PC-3 (cell line): ENCODE measurements at regions of chr11 and their contacts with region 1.

Region 1: GRCh38 chr11:130002846-130003716 is 446 bp upstream of the PRDM10 start:
- DNase-seq: peak; percentile 99
- ATAC-seq: peak; percentile 68
- H3K4me3 ChIP-seq: peak overlapping the region; percentile 86
- H3K27ac ChIP-seq: peak overlapping the region; percentile 98
- H3K4me1 ChIP-seq: peaks cover 26% of the 10 kb centered on the region
- H3K27me3 ChIP-seq: no peaks in the 10 kb centered on the region
- CTCF ChIP-seq: 0 out of 2 replicates have a peak, but pooled peaks have one; percentile 7

Region 2: DNA sequence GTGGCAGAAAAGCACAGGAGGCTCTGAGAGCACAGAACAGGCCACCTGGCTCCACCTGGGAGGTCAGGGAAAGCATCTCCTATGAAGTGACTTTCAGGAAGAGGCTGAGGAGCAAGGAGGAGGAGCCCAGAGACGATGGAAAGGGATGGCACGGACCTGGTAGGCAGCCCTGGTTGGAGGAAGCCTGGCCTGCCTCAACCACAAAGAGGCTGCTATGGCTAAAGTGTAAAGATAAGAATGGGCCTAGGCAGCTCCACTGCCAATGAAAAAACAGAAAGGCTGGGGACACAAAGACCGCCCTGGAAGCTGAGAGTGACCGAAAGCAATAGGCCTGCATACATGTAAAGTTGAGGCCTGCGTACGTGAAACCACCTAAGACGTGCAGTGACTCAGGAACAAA is 1384.5 kb before region 1 on chr11:
- CTCF ChIA-PET with region 1: no interaction called
- POLR2A ChIA-PET with region 1: interaction called, 15 read pairs
- intact Hi-C with region 1: no loop called
- DNase-seq: no peak
- ATAC-seq: no peak
- H3K4me3 ChIP-seq: no peak overlapping the region
- H3K27ac ChIP-seq: no peak overlapping the region
- H3K4me1 ChIP-seq: peaks cover 4% of the 10 kb centered on the region; the same call in 1 of the 2 replicates
- H3K27me3 ChIP-seq: no peaks in the 10 kb centered on the region
- CTCF ChIP-seq: no peak

Region 3: GRCh38 chr11:129960216-129961214 is 42.6 kb before region 1 on chr11:
- CTCF ChIA-PET with region 1: no interaction called
- POLR2A ChIA-PET with region 1: interaction called, 25 read pairs
- intact Hi-C with region 1: loop called (anchors 2 kb)
- DNase-seq: peak; percentile 98
- ATAC-seq: peak; percentile 99
- H3K4me3 ChIP-seq: peak overlapping the region; percentile 8; the same call in 1 of the 2 replicates
- H3K27ac ChIP-seq: peak overlapping the region; percentile 55
- H3K4me1 ChIP-seq: peaks cover 19% of the 10 kb centered on the region
- H3K27me3 ChIP-seq: no peaks in the 10 kb centered on the region
- CTCF ChIP-seq: no peak

Region 4: GRCh38 chr11:130042093-130042591 is 39.1 kb after region 1 on chr11:
- CTCF ChIA-PET with region 1: no interaction called
- POLR2A ChIA-PET with region 1: no interaction called
- intact Hi-C with region 1: loop called (anchors 2 kb)
- DNase-seq: peak; percentile 97
- ATAC-seq: peak; percentile 100
- H3K4me3 ChIP-seq: no peak overlapping the region
- H3K27ac ChIP-seq: peak overlapping the region; percentile 81
- H3K4me1 ChIP-seq: peaks cover 19% of the 10 kb centered on the region
- H3K27me3 ChIP-seq: no peaks in the 10 kb centered on the region
- CTCF ChIP-seq: no peak

Region 5: DNA sequence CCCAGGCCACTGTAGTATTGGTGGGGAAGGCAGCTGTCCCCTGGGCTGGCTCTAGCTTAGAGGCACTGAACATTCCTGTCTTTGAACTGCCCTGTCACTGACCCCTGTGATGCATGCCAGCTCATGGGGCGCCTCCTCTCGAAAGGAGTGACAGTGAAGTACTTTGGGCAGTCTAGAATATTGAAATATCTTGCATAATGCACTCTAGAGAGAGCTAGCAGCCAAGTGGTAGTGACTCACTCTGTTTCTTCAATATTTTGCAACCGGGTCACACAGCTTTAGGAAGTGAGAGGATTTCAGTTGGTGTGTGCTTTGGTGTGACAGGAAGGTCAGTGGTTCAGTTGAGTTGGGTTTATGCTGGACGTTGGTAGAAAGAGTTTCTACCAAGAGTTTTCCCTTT is 121.0 kb after region 1 on chr11:
- CTCF ChIA-PET with region 1: interaction called, 3 read pairs
- POLR2A ChIA-PET with region 1: interaction called, 5 read pairs
- intact Hi-C with region 1: loop called (anchors 2 kb)
- DNase-seq: peak; percentile 96
- ATAC-seq: peak; percentile 94
- H3K4me3 ChIP-seq: peak overlapping the region; percentile 11; the same call in 1 of the 2 replicates
- H3K27ac ChIP-seq: peak overlapping the region; percentile 62
- H3K4me1 ChIP-seq: peaks cover 16% of the 10 kb centered on the region
- H3K27me3 ChIP-seq: no peaks in the 10 kb centered on the region
- CTCF ChIP-seq: peak; percentile 38

Region 6: GRCh38 chr11:130480711-130481140 is 477.6 kb after region 1 on chr11:
- CTCF ChIA-PET with region 1: no interaction called
- POLR2A ChIA-PET with region 1: interaction called, 11 read pairs
- intact Hi-C with region 1: no loop called
- DNase-seq: peak; percentile 12
- ATAC-seq: no peak
- H3K4me3 ChIP-seq: no peak overlapping the region
- H3K27ac ChIP-seq: no peak overlapping the region
- H3K4me1 ChIP-seq: peaks cover 18% of the 10 kb centered on the region
- H3K27me3 ChIP-seq: no peaks in the 10 kb centered on the region
- CTCF ChIP-seq: no peak